ENCODE measurements at regions of chr3 and their contacts with region 1.

Region 1: DNA sequence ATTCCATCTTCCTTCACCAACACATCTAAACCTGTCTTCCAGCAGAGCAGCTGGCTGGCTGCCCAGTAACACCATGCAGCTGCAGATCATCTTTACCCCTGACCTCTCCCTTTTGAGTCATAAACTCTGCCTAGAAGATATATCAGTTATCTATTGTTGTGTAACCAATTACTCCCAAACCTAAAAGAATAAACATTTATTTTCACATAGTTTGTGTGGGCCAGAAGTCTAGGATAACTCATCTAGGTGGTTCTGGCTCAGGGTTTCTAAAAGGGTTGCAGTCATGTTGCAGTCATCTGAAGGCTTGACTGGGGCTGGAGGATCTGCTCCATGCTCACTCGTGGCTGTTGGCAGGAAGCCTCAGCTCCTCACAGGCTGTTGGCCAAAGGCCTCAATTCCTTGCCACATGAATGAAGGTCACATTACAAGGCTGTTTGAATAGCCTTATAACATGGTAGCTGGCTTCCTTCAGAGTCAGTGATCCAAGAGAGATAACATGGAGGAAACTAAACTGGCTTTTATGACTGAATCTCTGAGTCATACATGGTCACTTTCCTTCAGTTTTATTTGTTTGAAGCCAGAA is 92.8 kb downstream of the GOLIM4 start:
- DNase-seq: no peak
- H3K4me3 Mint-ChIP-seq: no peak overlapping the region
- H3K27ac Mint-ChIP-seq: no peak overlapping the region
- H3K4me1 Mint-ChIP-seq: no peaks in the 10 kb centered on the region
- H3K27me3 Mint-ChIP-seq: peaks cover 3% of the 10 kb centered on the region

Region 2: DNA sequence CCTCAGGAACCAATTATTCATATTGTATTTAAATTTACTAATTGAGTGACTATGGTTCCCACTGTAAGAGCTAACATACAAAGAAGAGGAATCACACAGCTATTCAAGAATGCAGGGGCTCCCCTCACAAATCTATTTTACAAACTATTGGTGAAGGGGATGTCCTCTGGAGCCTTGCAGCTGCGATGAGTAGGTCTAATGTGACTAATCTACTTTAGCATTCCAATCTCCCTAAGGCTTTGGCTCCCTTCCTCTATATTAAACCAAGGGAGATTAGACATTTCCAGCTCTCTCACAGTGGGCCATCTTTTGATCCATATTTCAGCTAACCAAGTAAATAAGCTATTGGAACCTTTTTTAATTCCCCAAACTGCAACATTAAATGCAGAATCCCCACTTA is 1651.4 kb before region 1 on chr3:
- intact Hi-C with region 1: no loop called
- DNase-seq: no peak
- H3K4me3 Mint-ChIP-seq: no peak overlapping the region
- H3K27ac Mint-ChIP-seq: no peak overlapping the region
- H3K4me1 Mint-ChIP-seq: no peaks in the 10 kb centered on the region
- H3K27me3 Mint-ChIP-seq: no peaks in the 10 kb centered on the region

Region 3: GRCh38 chr3:167941234-167941995 is 61.5 kb before region 1 on chr3:
- intact Hi-C with region 1: loop called (anchors 2 kb)
- DNase-seq: no peak
- H3K4me3 Mint-ChIP-seq: no peak overlapping the region
- H3K27ac Mint-ChIP-seq: no peak overlapping the region
- H3K4me1 Mint-ChIP-seq: no peaks in the 10 kb centered on the region
- H3K27me3 Mint-ChIP-seq: peaks cover 1% of the 10 kb centered on the region

Region 4: DNA sequence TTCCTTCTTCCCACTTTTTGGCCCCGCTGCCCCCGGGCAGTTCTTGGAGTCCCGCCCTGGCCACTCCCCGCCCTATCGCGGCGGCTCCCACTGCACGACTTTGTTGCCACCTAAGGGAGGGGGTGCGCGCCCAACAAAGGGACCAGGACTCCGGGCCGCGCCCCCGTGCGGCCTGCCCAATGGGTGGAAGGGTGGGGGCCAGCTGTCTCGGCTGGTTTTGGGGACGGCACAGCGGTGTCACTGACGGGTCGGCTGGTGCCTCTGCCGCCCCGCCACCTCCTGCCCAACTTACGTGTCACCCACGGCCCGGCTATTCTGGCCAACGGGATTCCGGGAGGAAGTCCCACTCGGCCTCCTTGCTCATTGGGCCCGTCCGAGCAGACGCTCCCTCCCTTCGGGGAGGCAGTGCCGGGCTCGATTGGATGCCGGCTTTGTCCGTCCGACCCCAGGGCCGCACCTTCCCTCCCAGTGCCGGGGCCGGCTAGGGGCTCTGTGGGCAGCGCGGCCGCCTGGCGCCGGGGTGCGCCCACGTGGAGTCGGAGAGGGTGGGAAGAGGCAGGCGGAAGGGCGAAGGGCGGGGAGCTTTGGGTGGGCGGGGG is 92.8 kb after region 1 on chr3 and contains the start of gene GOLIM4:
- intact Hi-C with region 1: no loop called
- DNase-seq: peak; percentile 86
- H3K4me3 Mint-ChIP-seq: peak within 1 kb of the TSS; percentile 83
- H3K27ac Mint-ChIP-seq: peak within 1 kb of the TSS; percentile 86
- H3K4me1 Mint-ChIP-seq: peaks cover 10% of the 10 kb centered on the region
- H3K27me3 Mint-ChIP-seq: peaks cover 36% of the 10 kb centered on the region
- total RNA-seq, gene GOLIM4: 8.5 and 8.6 TPM in 2 replicates